ENCODE measurements at regions of chr5 and their contacts with region 1.

Region 1: GRCh38 chr5:150700594-150701293 is at the start of gene RBM22:
- DNase-seq: peak; percentile 58
- H3K4me3 ChIP-seq: peak within 1 kb of the TSS; percentile 95
- H3K27ac ChIP-seq: peak within 1 kb of the TSS; percentile 91
- H3K27me3 ChIP-seq: no peaks in the 10 kb centered on the region
- CTCF ChIP-seq: peak; percentile 63
- polyA plus RNA-seq, gene RBM22: 42.4 and 49.5 TPM in 2 replicates

Region 2: DNA sequence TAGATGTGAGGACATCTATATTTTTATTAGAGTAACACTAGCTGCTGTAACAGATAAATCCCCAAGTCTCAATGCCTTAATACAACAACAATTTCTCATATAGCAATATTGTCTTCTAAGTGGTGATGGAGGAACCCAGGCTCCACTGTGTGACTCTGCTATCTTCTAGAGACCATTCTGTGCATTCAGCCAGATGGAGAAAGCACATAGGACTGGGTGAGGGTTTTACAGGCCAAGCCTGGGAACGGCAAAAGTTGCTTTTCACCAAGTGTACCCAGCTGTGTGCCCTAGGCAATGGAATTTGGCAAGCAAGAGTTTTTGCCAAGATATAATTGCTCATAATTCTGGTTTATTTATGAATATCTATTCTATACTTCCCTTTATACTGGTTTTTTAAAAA is 11.6 kb before region 1 on chr5:
- CTCF ChIA-PET with region 1: interaction called, 14 read pairs
- POLR2A ChIA-PET with region 1: interaction called, 4 read pairs
- DNase-seq: no peak
- H3K4me3 ChIP-seq: no peak overlapping the region
- H3K27ac ChIP-seq: no peak overlapping the region
- H3K27me3 ChIP-seq: no peaks in the 10 kb centered on the region
- CTCF ChIP-seq: no peak

Measured in AG04450 (cell line).